ENCODE measurements at regions of chr17 and their contacts with region 1.

Region 1: DNA sequence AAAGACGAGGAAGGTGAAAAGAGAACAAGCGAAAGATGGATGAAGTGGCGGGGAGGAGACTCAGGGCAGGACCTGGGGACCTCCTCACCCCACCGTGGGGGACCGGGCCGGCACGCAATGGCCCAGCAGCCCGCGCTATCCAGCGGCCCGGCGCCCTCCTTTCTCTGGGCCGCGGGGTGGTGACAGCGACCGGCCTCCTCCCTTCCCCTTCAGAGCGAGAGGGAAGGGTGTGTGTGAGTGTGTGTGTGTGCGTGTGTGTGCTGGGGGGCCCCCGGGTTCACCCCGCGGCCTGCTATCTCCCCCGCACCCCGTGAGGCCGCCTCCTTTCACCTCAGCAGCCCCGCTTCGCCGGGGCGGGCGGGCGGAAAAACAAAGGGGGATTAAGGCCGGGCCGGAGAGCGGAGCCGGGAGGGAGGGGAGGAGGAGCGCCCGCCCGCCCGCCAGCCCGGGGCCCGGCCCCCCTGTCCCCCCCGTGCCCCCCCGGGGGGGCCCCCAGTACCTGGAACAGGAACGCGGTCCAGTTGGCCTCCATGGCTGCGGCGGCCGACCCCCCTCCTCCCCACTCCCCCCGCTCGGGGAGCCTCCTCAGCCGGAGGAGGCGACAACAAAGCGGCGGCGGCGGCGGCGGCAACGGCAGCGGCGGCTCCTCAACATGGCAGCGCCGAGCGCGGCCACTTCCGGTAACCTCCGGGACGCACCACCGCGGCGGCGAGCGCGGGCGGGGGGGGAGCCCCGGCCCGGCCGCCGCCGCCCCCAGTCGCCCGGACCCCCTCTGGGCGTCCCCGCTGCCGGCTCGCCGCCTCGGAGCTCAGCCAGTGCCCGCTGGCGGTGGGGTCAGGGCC is at the start of gene VEZF1:
- DNase-seq: peak; percentile 72
- H3K4me3 Mint-ChIP-seq: peak within 1 kb of the TSS; percentile 93
- H3K27ac Mint-ChIP-seq: peak within 1 kb of the TSS; percentile 93
- H3K4me1 Mint-ChIP-seq: peaks cover 64% of the 10 kb centered on the region
- H3K27me3 Mint-ChIP-seq: no peaks in the 10 kb centered on the region
- total RNA-seq, gene VEZF1: 37.7 and 41.2 TPM in 2 replicates

Region 2: GRCh38 chr17:57892146-57892828 is 95.5 kb before region 1 on chr17:
- intact Hi-C with region 1: loop called (anchors 1 kb)
- DNase-seq: peak; percentile 68
- H3K4me3 Mint-ChIP-seq: no peak overlapping the region
- H3K27ac Mint-ChIP-seq: no peak overlapping the region
- H3K4me1 Mint-ChIP-seq: no peaks in the 10 kb centered on the region
- H3K27me3 Mint-ChIP-seq: peaks cover 12% of the 10 kb centered on the region

Region 3: GRCh38 chr17:57948555-57949428 is 39.0 kb before region 1 on chr17:
- intact Hi-C with region 1: loop called (anchors 2 kb)
- DNase-seq: no peak
- H3K4me3 Mint-ChIP-seq: no peak overlapping the region
- H3K27ac Mint-ChIP-seq: no peak overlapping the region
- H3K4me1 Mint-ChIP-seq: peaks cover 44% of the 10 kb centered on the region
- H3K27me3 Mint-ChIP-seq: peaks cover 58% of the 10 kb centered on the region

Region 4: GRCh38 chr17:57955183-57955931 is 32.4 kb before region 1 on chr17 and contains the start of gene CUEDC1:
- intact Hi-C with region 1: loop called (anchors 2 kb)
- DNase-seq: peak; percentile 59
- H3K4me3 Mint-ChIP-seq: peak within 1 kb of the TSS; percentile 45
- H3K27ac Mint-ChIP-seq: no peak within 1 kb of the TSS
- H3K4me1 Mint-ChIP-seq: peaks cover 28% of the 10 kb centered on the region
- H3K27me3 Mint-ChIP-seq: peaks cover 55% of the 10 kb centered on the region
- total RNA-seq, gene CUEDC1: 0.37 TPM in 1 of 2 replicates, not detected in the other

Region 5: GRCh38 chr17:58028578-58028977 is 40.8 kb after region 1 on chr17:
- intact Hi-C with region 1: no loop called
- DNase-seq: no peak
- H3K4me3 Mint-ChIP-seq: no peak overlapping the region
- H3K27ac Mint-ChIP-seq: no peak overlapping the region
- H3K4me1 Mint-ChIP-seq: no peaks in the 10 kb centered on the region
- H3K27me3 Mint-ChIP-seq: peaks cover 32% of the 10 kb centered on the region

Region 6: GRCh38 chr17:58156839-58157803 is 169.3 kb after region 1 on chr17:
- intact Hi-C with region 1: no loop called
- DNase-seq: peak; percentile 43
- H3K4me3 Mint-ChIP-seq: peak overlapping the region; percentile 83
- H3K27ac Mint-ChIP-seq: peak overlapping the region; percentile 79
- H3K4me1 Mint-ChIP-seq: peaks cover 49% of the 10 kb centered on the region
- H3K27me3 Mint-ChIP-seq: peaks cover 15% of the 10 kb centered on the region

Region 7: DNA sequence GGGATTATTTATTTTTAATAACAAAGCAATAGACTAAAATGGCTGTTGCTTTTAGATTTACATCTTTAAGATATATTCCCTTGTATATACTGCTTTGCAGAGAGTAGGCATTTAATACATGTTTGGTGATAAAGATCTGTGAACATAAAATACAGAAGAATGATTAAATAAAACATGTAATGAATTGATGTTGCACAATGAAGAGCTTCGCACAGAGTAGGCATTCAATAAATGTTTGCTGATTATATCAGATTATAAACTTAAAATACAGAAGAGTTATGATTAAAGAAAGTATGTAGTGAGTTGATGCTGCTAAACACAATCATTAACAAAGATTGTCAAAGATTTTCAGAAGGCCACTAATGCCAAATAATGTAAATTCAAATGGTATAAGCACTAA is 476.0 kb after region 1 on chr17:
- intact Hi-C with region 1: no loop called
- DNase-seq: no peak
- H3K4me3 Mint-ChIP-seq: no peak overlapping the region
- H3K27ac Mint-ChIP-seq: no peak overlapping the region
- H3K4me1 Mint-ChIP-seq: no peaks in the 10 kb centered on the region
- H3K27me3 Mint-ChIP-seq: peaks cover 2% of the 10 kb centered on the region